Activated naive CD4-positive, alpha-beta T cell treated with anti-CD3 and anti-CD28 coated beads for 36 hours (primary cell): ENCODE measurements at regions of chr14 and their contacts with region 1.

Region 1: GRCh38 chr14:98018628-98019027 is 1221.4 kb downstream of the VRK1 start:
- DNase-seq: peak; percentile 75
- H3K4me3 Mint-ChIP-seq: no peak overlapping the region
- H3K27ac Mint-ChIP-seq: peak overlapping the region; percentile 2
- H3K4me1 Mint-ChIP-seq: peaks cover 87% of the 10 kb centered on the region
- H3K27me3 Mint-ChIP-seq: no peaks in the 10 kb centered on the region

Region 2: DNA sequence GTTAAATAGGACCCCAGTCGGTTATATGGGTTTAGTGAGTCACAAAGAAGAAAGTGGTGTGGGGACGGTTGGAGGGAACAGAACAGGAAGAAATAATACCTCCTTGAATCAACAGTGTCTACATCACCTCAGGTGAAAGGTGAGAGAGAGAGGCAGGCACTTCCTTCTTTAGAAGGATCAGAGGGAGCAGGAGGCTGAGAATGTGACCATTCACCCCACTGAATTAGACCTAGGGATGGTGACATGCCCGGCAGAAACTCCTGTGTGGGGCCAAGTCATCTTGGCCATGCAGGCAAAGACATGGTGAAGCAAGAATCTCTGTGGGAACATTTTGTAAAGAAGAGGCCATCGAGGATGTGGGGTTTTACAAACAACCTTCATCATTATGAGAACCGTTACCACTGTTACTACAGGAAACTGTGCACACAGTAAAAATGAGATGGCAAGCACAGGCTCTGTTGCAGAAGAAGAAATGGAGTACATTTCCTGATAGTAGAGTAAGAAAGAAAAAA is 24.6 kb before region 1 on chr14:
- CTCF ChIA-PET with region 1: no interaction called
- intact Hi-C with region 1: loop called (anchors 1 kb)
- DNase-seq: peak; percentile 71
- H3K4me3 Mint-ChIP-seq: peak overlapping the region; percentile 70
- H3K27ac Mint-ChIP-seq: peak overlapping the region; percentile 100
- H3K4me1 Mint-ChIP-seq: peaks cover 82% of the 10 kb centered on the region
- H3K27me3 Mint-ChIP-seq: no peaks in the 10 kb centered on the region

Region 3: GRCh38 chr14:98008381-98009113 is 10.1 kb before region 1 on chr14:
- CTCF ChIA-PET with region 1: no interaction called
- intact Hi-C with region 1: loop called (anchors 1 kb)
- DNase-seq: peak; percentile 65
- H3K4me3 Mint-ChIP-seq: no peak overlapping the region
- H3K27ac Mint-ChIP-seq: peak overlapping the region; percentile 96
- H3K4me1 Mint-ChIP-seq: peaks cover 62% of the 10 kb centered on the region
- H3K27me3 Mint-ChIP-seq: no peaks in the 10 kb centered on the region